ENCODE measurements at regions of chr9 and their contacts with region 1.

Region 1: DNA sequence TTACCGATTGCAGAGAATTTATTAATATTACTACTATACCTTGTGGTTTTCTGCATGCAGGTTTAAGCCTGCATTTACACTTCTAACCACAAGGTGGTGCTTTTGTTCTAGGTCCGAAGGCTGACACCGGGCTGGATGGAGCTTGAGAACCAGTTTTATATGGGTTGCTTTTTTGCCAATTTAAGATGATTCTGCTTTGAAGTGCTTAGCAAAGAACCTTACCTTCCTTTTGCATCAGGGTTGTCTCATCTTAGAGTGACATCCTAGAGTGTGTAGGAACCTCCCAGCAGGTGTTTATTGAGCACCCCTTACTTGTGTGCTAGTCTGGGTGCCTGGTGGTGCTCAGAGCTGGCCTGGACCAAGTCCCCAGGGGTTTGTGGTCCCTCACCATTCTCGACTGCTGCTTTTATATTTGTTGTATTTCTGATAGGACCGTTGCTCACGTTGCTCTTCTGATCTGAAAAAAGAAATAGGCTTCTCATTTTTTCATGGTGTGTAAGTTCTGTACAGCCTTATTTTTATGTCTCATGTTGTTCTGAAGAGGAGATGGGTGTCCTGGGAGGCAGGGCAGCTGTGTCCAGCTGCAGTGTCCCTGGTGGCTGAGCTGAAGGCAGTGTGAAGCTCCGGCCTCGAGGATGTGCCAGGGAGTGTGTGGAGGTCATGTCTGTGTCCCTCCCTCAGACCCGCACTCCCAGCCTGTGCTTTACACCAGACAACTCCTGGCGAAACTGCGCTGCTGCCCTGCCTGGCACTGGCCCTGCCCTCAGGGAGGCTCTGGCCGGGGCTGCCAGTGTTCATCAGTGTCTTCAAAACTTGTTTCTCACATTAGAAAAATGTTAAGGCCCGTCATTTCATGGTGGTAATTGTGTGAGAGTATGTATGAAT is 54.3 kb downstream of the EHMT1 start:
- DNase-seq: peak; percentile 44
- ATAC-seq: no peak
- H3K4me3 ChIP-seq: no peak overlapping the region
- H3K27ac ChIP-seq: no peak overlapping the region
- H3K4me1 ChIP-seq: peaks cover 51% of the 10 kb centered on the region
- H3K27me3 ChIP-seq: no peaks in the 10 kb centered on the region
- CTCF ChIP-seq: peak; percentile 79
- EP300 ChIP-seq: no peak
- POLR2A ChIP-seq: no peak
- RAD21 ChIP-seq: peak; percentile 61

Region 2: GRCh38 chr9:137556069-137556838 is 116.9 kb before region 1 on chr9:
- CTCF ChIA-PET with region 1: no interaction called
- POLR2A ChIA-PET with region 1: no interaction called
- in situ Hi-C with region 1: no loop called
- intact Hi-C with region 1: no loop called
- DNase-seq: no peak
- ATAC-seq: no peak
- H3K4me3 ChIP-seq: no peak overlapping the region
- H3K27ac ChIP-seq: no peak overlapping the region
- H3K4me1 ChIP-seq: peaks cover 31% of the 10 kb centered on the region
- H3K27me3 ChIP-seq: no peaks in the 10 kb centered on the region
- CTCF ChIP-seq: no peak
- EP300 ChIP-seq: no peak
- POLR2A ChIP-seq: no peak
- RAD21 ChIP-seq: no peak

Region 3: GRCh38 chr9:137694967-137695879 is 22.1 kb after region 1 on chr9:
- CTCF ChIA-PET with region 1: interaction called, 19 read pairs
- POLR2A ChIA-PET with region 1: interaction called, 8 read pairs
- in situ Hi-C with region 1: no loop called
- intact Hi-C with region 1: loop called (anchors 1 kb)
- DNase-seq: peak; percentile 64
- ATAC-seq: peak; percentile 98
- H3K4me3 ChIP-seq: no peak overlapping the region
- H3K27ac ChIP-seq: no peak overlapping the region
- H3K4me1 ChIP-seq: peaks cover 63% of the 10 kb centered on the region
- H3K27me3 ChIP-seq: no peaks in the 10 kb centered on the region
- CTCF ChIP-seq: peak; percentile 92
- EP300 ChIP-seq: no peak
- POLR2A ChIP-seq: no peak
- RAD21 ChIP-seq: peak; percentile 81

Region 4: DNA sequence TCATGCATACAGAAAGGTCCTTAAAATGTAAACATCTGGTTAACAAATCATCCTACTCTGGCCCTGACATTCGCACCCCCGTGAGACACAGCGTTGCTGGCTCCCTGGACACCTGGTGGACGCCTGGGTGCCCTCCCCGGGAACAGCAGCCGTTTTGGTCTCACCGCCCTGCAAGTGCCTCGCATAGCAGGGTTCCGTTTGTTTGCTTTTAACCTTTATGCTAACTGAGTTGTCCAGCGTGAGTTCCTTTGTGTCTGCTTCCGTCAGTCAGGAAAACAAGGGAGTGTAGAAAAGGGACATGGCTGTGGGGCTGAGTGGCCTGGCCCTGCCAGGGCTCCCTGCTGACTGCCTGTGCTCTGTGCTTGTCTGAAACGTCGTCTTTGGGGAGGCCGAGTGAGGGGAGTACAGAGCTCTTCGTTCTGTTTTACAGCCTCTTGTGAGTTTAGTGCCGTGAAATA is 112.6 kb after region 1 on chr9:
- CTCF ChIA-PET with region 1: no interaction called
- POLR2A ChIA-PET with region 1: no interaction called
- in situ Hi-C with region 1: no loop called
- intact Hi-C with region 1: loop called (anchors 5 kb)
- DNase-seq: peak; percentile 87
- ATAC-seq: peak; percentile 84
- H3K4me3 ChIP-seq: no peak overlapping the region
- H3K27ac ChIP-seq: peak overlapping the region; percentile 61
- H3K4me1 ChIP-seq: peaks cover 62% of the 10 kb centered on the region
- H3K27me3 ChIP-seq: no peaks in the 10 kb centered on the region
- CTCF ChIP-seq: peak; percentile 58
- EP300 ChIP-seq: peak in 1 of 2 experiments; percentile 41; a peak in 1 of 4 replicates
- POLR2A ChIP-seq: no peak
- RAD21 ChIP-seq: 0 out of 2 replicates have a peak, but pooled peaks have one; percentile 21